HEK293 (cell line): ENCODE measurements at regions of chr19 and their contacts with region 1.

Region 1: GRCh38 chr19:45817010-45817724 is 2.1 kb upstream of the RSPH6A start:
- H3K4me3 ChIP-seq: no peak overlapping the region
- H3K27ac ChIP-seq: peak overlapping the region; percentile 56
- H3K4me1 ChIP-seq: peaks cover 4% of the 10 kb centered on the region; the same call in 1 of the 2 replicates
- CTCF ChIP-seq: peak; percentile 99

Region 2: GRCh38 chr19:45798995-45799517 is 18.1 kb before region 1 on chr19:
- CTCF ChIA-PET with region 1: interaction called, 80 read pairs
- POLR2A ChIA-PET with region 1: no interaction called
- H3K4me3 ChIP-seq: no peak overlapping the region
- H3K27ac ChIP-seq: no peak overlapping the region
- H3K4me1 ChIP-seq: peaks cover 2% of the 10 kb centered on the region; the same call in 1 of the 2 replicates
- CTCF ChIP-seq: peak; percentile 76

Region 3: DNA sequence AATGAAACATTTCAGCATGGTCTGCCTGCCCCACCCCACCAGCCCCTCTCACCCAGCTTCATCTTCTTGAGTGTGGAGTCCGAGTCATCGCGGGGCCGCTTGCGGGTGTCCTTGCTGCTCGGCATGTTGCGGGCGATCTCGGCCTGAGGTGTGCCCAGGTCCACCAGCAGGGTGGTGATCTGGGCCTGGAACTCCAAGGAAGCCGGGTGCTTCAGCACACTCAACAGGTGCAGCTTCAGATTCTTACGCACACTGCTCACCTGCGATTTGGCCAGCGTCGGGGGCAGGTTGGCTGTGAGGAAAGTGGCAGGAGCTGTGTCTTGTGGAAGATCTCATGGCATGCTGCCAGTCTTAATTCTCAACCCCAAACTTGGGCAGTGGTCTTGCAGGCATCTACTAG is 25.0 kb after region 1 on chr19:
- CTCF ChIA-PET with region 1: interaction called, 20 read pairs
- POLR2A ChIA-PET with region 1: interaction called, 3 read pairs
- H3K4me3 ChIP-seq: no peak overlapping the region
- H3K27ac ChIP-seq: peak overlapping the region; percentile 13; the same call in 1 of the 2 replicates
- H3K4me1 ChIP-seq: no peaks in the 10 kb centered on the region
- CTCF ChIP-seq: no peak

Region 4: GRCh38 chr19:45862564-45863334 is 45.6 kb after region 1 on chr19 and contains the start of gene SYMPK:
- CTCF ChIA-PET with region 1: interaction called, 16 read pairs
- POLR2A ChIA-PET with region 1: interaction called, 8 read pairs
- H3K4me3 ChIP-seq: peak within 1 kb of the TSS; percentile 71
- H3K27ac ChIP-seq: peak within 1 kb of the TSS; percentile 83
- H3K4me1 ChIP-seq: peaks cover 10% of the 10 kb centered on the region
- CTCF ChIP-seq: no peak; the same call in 1 of the 2 replicates

Region 5: DNA sequence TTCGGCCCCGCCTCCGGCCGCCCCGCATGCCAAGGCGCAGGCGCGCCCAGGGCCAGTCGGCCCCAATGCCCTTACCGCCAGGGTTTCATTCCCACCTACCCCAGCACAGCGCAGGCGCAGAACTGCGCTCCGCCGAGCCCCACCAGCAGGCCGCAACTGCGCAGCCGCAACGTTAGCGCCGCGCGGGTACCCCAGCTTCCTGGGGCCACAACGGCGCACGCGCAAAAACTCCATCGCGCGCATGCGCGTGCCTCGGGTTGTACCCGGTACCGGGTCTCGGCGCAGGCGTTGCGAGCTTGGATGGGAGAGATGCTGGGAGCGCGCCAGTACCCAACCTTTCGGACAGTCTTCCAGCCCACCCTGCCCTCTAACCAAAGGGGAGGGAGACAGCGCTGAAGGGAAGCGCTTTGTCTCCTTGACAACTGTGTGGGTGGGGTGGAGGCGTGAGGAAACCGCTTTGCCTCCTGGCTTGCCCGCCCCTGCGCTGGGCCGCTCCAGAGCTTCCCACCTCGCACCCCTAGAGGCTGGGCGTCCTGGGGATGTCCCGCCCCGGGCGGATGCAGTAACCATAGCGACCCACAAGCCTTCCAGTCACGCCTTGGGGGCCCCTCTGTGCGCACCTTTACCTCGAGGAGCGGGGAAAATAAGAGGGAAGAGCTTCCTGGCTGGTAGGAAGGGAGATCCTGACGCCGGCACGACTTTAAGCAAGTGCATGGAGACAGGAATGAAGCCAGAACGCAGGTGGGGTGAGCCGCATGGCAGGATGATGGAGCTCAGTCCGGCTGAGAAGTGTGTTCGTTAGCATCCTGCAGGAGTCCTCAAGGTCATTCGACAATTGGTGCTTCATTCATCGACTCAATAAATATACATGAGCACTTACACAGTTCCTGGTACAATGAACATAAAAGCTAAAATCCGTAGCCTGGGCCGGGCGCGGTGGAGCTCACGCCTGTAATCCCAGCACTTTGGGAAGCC is 85.8 kb after region 1 on chr19:
- CTCF ChIA-PET with region 1: interaction called, 12 read pairs
- POLR2A ChIA-PET with region 1: no interaction called
- H3K4me3 ChIP-seq: peak overlapping the region; percentile 75
- H3K27ac ChIP-seq: peak overlapping the region; percentile 63
- H3K4me1 ChIP-seq: peaks cover 9% of the 10 kb centered on the region; the same call in 1 of the 2 replicates
- CTCF ChIP-seq: peak; percentile 52